ENCODE measurements at regions of chr21 and their contacts with region 1.

Region 1: DNA sequence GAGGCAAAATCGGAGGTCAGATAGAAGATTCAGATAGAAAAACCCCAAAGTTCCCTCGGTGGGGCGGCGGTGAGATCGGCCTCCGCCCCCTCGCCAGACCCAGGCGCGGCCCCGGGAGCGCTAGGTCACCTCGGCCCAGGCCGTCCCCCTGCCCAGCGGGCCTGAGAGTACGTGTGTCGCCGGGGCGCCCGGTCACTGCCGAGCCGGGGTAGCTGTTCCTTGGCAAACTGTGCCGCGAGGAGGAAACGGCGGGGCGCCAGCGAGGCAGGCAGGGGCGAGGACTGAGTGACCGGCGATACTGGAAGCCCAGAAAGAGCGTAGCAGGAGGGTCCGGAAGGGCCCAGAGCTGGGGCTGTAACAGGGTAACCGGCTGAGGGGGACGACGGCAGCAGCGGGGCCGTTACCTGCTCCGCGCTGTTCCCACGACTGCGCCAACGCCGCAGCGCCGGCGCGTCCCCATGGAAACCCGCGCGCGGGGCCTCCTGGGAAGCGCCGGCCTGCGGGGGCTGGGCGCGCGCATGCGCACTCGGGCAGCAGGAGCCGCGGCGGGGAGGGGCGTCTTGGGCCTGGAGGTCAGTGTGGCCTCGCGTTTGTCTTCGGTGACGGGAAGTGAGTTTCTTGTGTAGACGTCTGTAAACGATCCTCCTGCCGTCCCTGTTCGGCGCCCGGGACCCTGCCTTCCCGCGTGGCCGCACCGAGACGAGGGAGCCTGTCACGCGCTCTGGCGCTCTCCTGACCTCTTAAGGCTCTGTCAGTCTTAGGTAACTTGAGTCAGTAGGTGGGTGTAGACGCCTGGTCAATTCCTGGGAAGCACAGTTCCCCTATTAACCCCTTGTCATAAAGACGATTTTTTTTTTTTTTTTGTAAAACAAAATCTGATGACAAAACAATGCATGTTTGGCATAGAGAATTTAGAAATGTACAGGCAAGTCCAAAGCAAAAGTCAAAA is at the start of gene LCA5L:
- DNase-seq: peak; percentile 95
- ATAC-seq: peak; percentile 89
- H3K4me3 ChIP-seq: peak within 1 kb of the TSS; percentile 97
- H3K27ac ChIP-seq: peak within 1 kb of the TSS; percentile 31; the same call in 1 of the 2 replicates
- H3K4me1 ChIP-seq: peaks cover 11% of the 10 kb centered on the region
- H3K27me3 ChIP-seq: no peaks in the 10 kb centered on the region
- CTCF ChIP-seq: 0 out of 2 replicates have a peak, but pooled peaks have one; percentile 16
- total RNA-seq, gene LCA5L: 0.40 and 0.98 TPM in 2 replicates

Region 2: GRCh38 chr21:39183237-39184007 is 262.2 kb before region 1 on chr21 and contains the start of gene PSMG1:
- CTCF ChIA-PET with region 1: interaction called, 3 read pairs
- POLR2A ChIA-PET with region 1: no interaction called
- intact Hi-C with region 1: loop called (anchors 5 kb)
- DNase-seq: peak; percentile 96
- ATAC-seq: peak; percentile 89
- H3K4me3 ChIP-seq: peak within 1 kb of the TSS; percentile 85
- H3K27ac ChIP-seq: peak within 1 kb of the TSS; percentile 44
- H3K4me1 ChIP-seq: peaks cover 18% of the 10 kb centered on the region
- H3K27me3 ChIP-seq: no peaks in the 10 kb centered on the region
- CTCF ChIP-seq: no peak
- total RNA-seq, gene PSMG1: 110 and 113 TPM in 2 replicates

Region 3: DNA sequence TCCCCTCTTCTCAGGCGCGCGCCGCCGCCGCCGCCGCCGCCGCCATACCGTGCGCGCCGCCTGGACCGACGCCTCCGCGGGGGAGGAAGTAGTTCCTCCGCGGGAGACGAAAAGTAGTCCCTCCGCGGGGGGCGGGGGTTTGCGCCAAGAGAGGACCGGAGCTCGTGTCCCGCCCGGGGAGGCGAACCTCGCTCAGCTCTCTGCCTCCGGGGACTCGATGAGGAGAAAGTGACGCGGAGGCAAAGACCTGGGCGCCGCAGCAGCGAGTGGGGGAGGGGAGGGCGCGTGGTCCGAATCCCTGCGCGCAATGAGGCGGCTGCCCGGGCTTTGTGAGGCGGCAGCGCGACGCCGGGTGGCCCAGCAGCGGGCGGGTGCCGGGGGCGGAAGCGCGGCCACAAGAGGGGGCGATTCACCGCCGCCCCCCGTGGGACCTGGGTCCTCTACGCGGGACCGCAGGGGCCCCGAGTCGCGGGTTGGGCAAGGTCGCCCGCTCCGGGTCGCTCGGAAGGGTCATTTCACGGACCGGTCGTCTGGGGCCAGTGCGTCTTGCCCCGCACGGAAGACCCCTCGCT is 131.9 kb before region 1 on chr21 and contains the start of gene BRWD1:
- CTCF ChIA-PET with region 1: no interaction called
- POLR2A ChIA-PET with region 1: no interaction called
- intact Hi-C with region 1: loop called (anchors 10 kb)
- DNase-seq: peak; percentile 77
- ATAC-seq: peak; percentile 55
- H3K4me3 ChIP-seq: peak within 1 kb of the TSS; percentile 77
- H3K27ac ChIP-seq: peak within 1 kb of the TSS; percentile 71
- H3K4me1 ChIP-seq: peaks cover 20% of the 10 kb centered on the region
- H3K27me3 ChIP-seq: no peaks in the 10 kb centered on the region
- CTCF ChIP-seq: no peak
- total RNA-seq, gene BRWD1: 25.1 and 29.3 TPM in 2 replicates

Region 4: DNA sequence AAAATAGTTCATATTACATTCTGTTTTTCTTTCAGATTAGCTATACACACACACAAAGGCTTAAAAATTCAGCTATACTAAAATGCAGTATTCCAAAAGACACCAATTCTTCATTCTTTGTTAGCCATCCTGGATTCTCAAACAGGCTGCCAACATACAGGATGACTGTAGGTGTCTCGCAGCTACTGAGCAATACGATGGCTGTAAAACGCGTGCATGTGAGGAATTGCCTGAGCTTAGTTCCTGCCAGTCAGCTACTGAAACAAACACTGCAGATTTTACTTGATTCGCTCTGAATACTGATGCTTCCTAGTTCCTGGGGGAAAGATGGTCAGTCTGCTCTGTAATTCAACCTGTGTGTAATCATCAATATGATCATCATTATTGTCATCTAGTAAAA is 72.0 kb before region 1 on chr21:
- CTCF ChIA-PET with region 1: interaction called, 16 read pairs
- POLR2A ChIA-PET with region 1: no interaction called
- intact Hi-C with region 1: loop called (anchors 1 kb)
- DNase-seq: peak; percentile 73
- ATAC-seq: peak; percentile 96
- H3K4me3 ChIP-seq: peak overlapping the region; percentile 31; the same call in 1 of the 2 replicates
- H3K27ac ChIP-seq: no peak overlapping the region
- H3K4me1 ChIP-seq: peaks cover 7% of the 10 kb centered on the region; the same call in 1 of the 2 replicates
- H3K27me3 ChIP-seq: no peaks in the 10 kb centered on the region
- CTCF ChIP-seq: peak; percentile 67

Region 5: GRCh38 chr21:39379986-39380891 is 65.4 kb before region 1 on chr21:
- CTCF ChIA-PET with region 1: interaction called, 6 read pairs
- POLR2A ChIA-PET with region 1: interaction called, 3 read pairs
- intact Hi-C with region 1: loop called (anchors 2 kb)
- DNase-seq: peak; percentile 97
- ATAC-seq: peak; percentile 92
- H3K4me3 ChIP-seq: peak overlapping the region; percentile 85
- H3K27ac ChIP-seq: peak overlapping the region; percentile 17; the same call in 1 of the 2 replicates
- H3K4me1 ChIP-seq: peaks cover 19% of the 10 kb centered on the region
- H3K27me3 ChIP-seq: no peaks in the 10 kb centered on the region
- CTCF ChIP-seq: no peak

Region 6: DNA sequence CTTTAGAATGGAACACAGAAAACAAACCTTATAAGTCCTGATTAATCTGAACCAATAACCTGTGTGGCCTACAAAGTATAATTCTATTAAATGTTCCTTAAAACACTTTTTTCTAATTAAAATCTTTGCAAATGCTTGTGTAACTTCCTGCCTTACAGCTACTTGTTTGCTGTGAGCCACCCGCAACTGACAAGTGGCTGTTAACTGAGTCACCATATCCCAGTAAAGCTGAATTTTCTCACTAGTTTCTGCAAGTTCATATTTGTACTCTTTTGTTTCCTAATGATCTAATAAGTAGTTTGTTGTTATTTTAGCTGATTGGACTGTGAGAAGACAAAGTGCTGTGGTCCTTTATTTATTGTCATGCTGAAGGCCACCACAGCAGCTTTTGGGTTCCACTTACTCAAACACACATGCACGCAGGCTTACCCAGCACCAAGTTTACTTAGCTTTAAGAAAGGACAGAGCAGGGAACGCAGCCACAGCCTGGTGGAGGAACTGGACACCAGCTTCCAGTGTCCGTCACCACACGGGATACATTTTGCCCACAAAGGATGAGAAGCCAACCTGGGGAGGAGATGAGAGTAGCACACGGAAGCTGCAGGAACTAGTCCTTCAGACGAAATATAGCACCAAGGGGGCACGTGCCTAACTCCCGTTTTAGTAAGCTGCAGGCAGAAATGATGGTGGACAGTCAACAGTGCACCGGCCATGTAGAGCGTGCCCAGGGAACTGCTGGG is 47.8 kb before region 1 on chr21:
- CTCF ChIA-PET with region 1: no interaction called
- POLR2A ChIA-PET with region 1: interaction called, 13 read pairs
- intact Hi-C with region 1: no loop called
- DNase-seq: no peak
- ATAC-seq: no peak
- H3K4me3 ChIP-seq: no peak overlapping the region
- H3K27ac ChIP-seq: no peak overlapping the region
- H3K4me1 ChIP-seq: no peaks in the 10 kb centered on the region
- H3K27me3 ChIP-seq: no peaks in the 10 kb centered on the region
- CTCF ChIP-seq: no peak

Region 7: GRCh38 chr21:39555911-39556590 is 110.5 kb after region 1 on chr21:
- CTCF ChIA-PET with region 1: no interaction called
- POLR2A ChIA-PET with region 1: no interaction called
- intact Hi-C with region 1: no loop called
- DNase-seq: no peak
- ATAC-seq: no peak
- H3K4me3 ChIP-seq: no peak overlapping the region
- H3K27ac ChIP-seq: no peak overlapping the region
- H3K4me1 ChIP-seq: no peaks in the 10 kb centered on the region
- H3K27me3 ChIP-seq: peaks cover 19% of the 10 kb centered on the region; the same call in 1 of the 2 replicates
- CTCF ChIP-seq: no peak